ENCODE measurements at regions of chr6 and their contacts with region 1.

Region 1: DNA sequence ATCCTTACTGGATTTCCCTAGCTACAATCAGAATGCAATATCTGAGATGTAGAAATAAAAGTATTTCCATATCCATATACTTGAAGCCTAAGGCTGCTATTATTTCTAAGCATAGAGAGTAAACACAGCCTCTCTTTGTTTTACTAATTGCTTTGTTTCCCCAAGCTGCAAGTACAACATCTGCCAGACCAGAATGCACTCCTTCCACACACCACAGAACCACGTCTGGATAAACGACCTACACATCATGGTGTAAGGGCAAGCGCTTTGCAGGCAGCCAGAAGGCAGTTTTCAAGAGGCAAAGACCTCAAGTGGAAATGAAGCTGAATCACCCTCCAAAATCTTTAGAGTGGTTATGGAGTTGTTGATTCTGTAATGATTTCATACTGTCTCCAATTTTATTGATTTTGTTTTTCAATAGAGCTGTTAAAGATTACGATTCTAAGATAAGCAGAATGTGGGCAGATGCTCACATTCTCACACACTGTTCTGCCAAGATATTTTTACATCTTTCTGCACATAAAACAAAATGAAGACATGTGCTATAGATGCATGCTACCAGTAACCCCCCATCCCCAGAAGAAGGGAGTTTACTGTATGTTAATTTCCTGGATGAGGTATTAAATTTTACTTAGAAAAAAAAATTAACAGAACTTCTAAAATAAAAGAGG is 88.8 kb downstream of the THEMIS start:
- DNase-seq: peak; percentile 30
- H3K4me3 Mint-ChIP-seq: peak overlapping the region; percentile 50
- H3K27ac Mint-ChIP-seq: peak overlapping the region; percentile 42
- H3K4me1 Mint-ChIP-seq: peaks cover 90% of the 10 kb centered on the region
- H3K27me3 Mint-ChIP-seq: no peaks in the 10 kb centered on the region

Region 2: DNA sequence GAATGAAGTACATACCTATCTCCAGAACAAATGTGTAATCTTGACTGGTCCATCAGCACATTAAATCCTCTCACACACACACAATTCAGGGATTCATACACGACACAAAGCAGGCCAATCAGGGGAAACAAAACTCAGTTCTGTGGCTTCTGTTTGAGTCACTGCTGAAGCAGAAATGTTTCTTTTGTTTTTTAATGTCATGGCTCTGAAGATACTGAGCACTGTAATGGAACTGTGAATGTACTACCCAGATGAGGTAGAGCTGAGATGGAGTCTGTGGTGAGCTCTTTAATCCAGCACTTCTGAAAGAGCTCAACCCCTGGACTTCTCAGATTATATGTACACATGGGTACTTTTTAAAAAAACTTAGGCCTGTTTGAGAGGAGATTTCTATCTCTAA is 27.6 kb before region 1 on chr6:
- CTCF ChIA-PET with region 1: interaction called, 6 read pairs
- intact Hi-C with region 1: loop called (anchors 1 kb)
- DNase-seq: peak; percentile 59
- H3K4me3 Mint-ChIP-seq: peak overlapping the region; percentile 5
- H3K27ac Mint-ChIP-seq: peak overlapping the region; percentile 71
- H3K4me1 Mint-ChIP-seq: peaks cover 76% of the 10 kb centered on the region
- H3K27me3 Mint-ChIP-seq: no peaks in the 10 kb centered on the region

Region 3: DNA sequence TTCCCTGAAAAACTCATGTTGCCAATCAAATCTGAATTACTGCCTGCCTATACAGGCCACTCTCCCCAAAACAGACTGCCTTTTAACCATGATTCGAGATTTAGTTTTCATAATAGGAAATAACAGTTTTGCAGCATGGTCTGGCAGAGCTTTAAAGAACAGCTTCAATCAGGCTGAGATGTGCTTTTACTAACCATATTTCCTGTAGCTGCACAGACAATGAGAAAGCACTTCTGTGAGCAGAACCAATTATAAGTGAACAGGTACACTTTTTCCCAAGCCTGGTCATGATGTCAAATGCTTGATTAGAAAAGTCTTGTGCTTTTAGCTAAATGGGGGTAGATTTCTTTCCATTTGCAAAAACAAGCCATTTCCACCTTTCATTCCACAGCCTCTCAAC is 19.4 kb before region 1 on chr6:
- CTCF ChIA-PET with region 1: interaction called, 14 read pairs
- intact Hi-C with region 1: loop called (anchors 1 kb)
- DNase-seq: no peak
- H3K4me3 Mint-ChIP-seq: peak overlapping the region; percentile 14
- H3K27ac Mint-ChIP-seq: peak overlapping the region; percentile 47
- H3K4me1 Mint-ChIP-seq: peaks cover 77% of the 10 kb centered on the region
- H3K27me3 Mint-ChIP-seq: no peaks in the 10 kb centered on the region

Region 4: GRCh38 chr6:127893541-127893940 is 81.5 kb after region 1 on chr6:
- CTCF ChIA-PET with region 1: no interaction called
- intact Hi-C with region 1: loop called (anchors 2 kb)
- DNase-seq: peak; percentile 55
- H3K4me3 Mint-ChIP-seq: peak overlapping the region; percentile 76
- H3K27ac Mint-ChIP-seq: peak overlapping the region; percentile 94
- H3K4me1 Mint-ChIP-seq: peaks cover 51% of the 10 kb centered on the region
- H3K27me3 Mint-ChIP-seq: no peaks in the 10 kb centered on the region

Region 5: GRCh38 chr6:128149796-128150195 is 337.8 kb after region 1 on chr6:
- CTCF ChIA-PET with region 1: no interaction called
- intact Hi-C with region 1: no loop called
- DNase-seq: no peak
- H3K4me3 Mint-ChIP-seq: no peak overlapping the region
- H3K27ac Mint-ChIP-seq: no peak overlapping the region
- H3K4me1 Mint-ChIP-seq: no peaks in the 10 kb centered on the region
- H3K27me3 Mint-ChIP-seq: no peaks in the 10 kb centered on the region